PC-9 (cell line): ENCODE measurements at regions of chr4 and their contacts with region 1.

Region 1: GRCh38 chr4:100581332-100581731 is 63.5 kb upstream of the EMCN start:
- DNase-seq: peak; percentile 59 to 79
- H3K4me3 ChIP-seq: no peak overlapping the region
- H3K27ac ChIP-seq: peak overlapping the region; percentile 22; the same call in 1 of the 2 replicates
- H3K4me1 ChIP-seq: peaks cover 19% of the 10 kb centered on the region
- H3K27me3 ChIP-seq: no peaks in the 10 kb centered on the region
- CTCF ChIP-seq: no peak

Region 2: GRCh38 chr4:100742045-100742444 is 160.7 kb after region 1 on chr4:
- CTCF ChIA-PET with region 1: no interaction called
- POLR2A ChIA-PET with region 1: interaction called, 4 read pairs
- intact Hi-C with region 1: loop called (anchors 10 kb)
- DNase-seq: peak in 1 of 2 experiments; percentile 38
- H3K4me3 ChIP-seq: no peak overlapping the region
- H3K27ac ChIP-seq: no peak overlapping the region
- H3K4me1 ChIP-seq: peaks cover 14% of the 10 kb centered on the region
- H3K27me3 ChIP-seq: no peaks in the 10 kb centered on the region
- CTCF ChIP-seq: peak; percentile 52